Caco-2 (cell line): ENCODE measurements at regions of chr19 and their contacts with region 1.

Region 1: GRCh38 chr19:38402967-38403861 is at the start of gene FAM98C:
- DNase-seq: peak; percentile 98 to 99
- H3K4me3 ChIP-seq: peak within 1 kb of the TSS; percentile 96
- H3K4me3 Mint-ChIP-seq: peak within 1 kb of the TSS; percentile 99
- H3K27ac Mint-ChIP-seq: peak within 1 kb of the TSS; percentile 97
- H3K4me1 ChIP-seq: peaks cover 10% of the 10 kb centered on the region; the same call in 1 of the 2 replicates
- H3K4me1 Mint-ChIP-seq: no peaks in the 10 kb centered on the region
- H3K27me3 ChIP-seq: no peaks in the 10 kb centered on the region
- H3K27me3 Mint-ChIP-seq: peaks cover 5% of the 10 kb centered on the region
- CTCF ChIP-seq: peak; percentile 71 to 97
- total RNA-seq, gene FAM98C: 17.3 and 19.7 TPM in 2 replicates

Region 2: DNA sequence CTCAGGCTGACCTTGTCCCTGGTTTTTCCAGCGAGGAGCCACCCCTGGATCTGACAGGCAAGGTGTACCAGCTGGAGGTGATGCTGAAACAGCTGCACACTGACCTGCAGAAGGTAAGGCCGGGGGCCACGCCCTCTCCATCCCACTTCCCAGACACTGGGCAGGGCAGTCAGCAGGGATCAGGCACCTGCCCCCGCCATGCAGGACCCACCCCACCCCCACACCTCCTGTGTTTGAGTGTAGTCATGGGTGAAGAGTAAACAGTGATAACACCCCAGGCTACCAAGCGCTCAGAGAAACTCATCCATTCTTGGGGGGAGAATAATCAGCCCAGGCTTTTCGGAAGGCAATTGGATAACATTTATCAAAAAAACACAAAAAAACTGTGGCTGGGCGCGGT is 199.1 kb before region 1 on chr19:
- CTCF ChIA-PET with region 1: no interaction called
- POLR2A ChIA-PET with region 1: no interaction called
- intact Hi-C with region 1: no loop called
- DNase-seq: peak; percentile 52 to 60
- H3K4me3 ChIP-seq: no peak overlapping the region
- H3K4me3 Mint-ChIP-seq: no peak overlapping the region
- H3K27ac Mint-ChIP-seq: peak overlapping the region; percentile 61
- H3K4me1 ChIP-seq: no peaks in the 10 kb centered on the region
- H3K4me1 Mint-ChIP-seq: no peaks in the 10 kb centered on the region
- H3K27me3 ChIP-seq: no peaks in the 10 kb centered on the region
- H3K27me3 Mint-ChIP-seq: no peaks in the 10 kb centered on the region
- CTCF ChIP-seq: no peak

Region 3: GRCh38 chr19:38229585-38230073 is 173.6 kb before region 1 on chr19:
- CTCF ChIA-PET with region 1: interaction called, 7 read pairs
- POLR2A ChIA-PET with region 1: no interaction called
- intact Hi-C with region 1: loop called (anchors 2 kb)
- DNase-seq: peak; percentile 91 to 92
- H3K4me3 ChIP-seq: peak overlapping the region; percentile 37
- H3K4me3 Mint-ChIP-seq: peak overlapping the region; percentile 44
- H3K27ac Mint-ChIP-seq: no peak overlapping the region
- H3K4me1 ChIP-seq: peaks cover 12% of the 10 kb centered on the region; the same call in 1 of the 2 replicates
- H3K4me1 Mint-ChIP-seq: peaks cover 5% of the 10 kb centered on the region
- H3K27me3 ChIP-seq: no peaks in the 10 kb centered on the region
- H3K27me3 Mint-ChIP-seq: peaks cover 12% of the 10 kb centered on the region
- CTCF ChIP-seq: peak in 1 of 2 experiments; percentile 8

Region 4: DNA sequence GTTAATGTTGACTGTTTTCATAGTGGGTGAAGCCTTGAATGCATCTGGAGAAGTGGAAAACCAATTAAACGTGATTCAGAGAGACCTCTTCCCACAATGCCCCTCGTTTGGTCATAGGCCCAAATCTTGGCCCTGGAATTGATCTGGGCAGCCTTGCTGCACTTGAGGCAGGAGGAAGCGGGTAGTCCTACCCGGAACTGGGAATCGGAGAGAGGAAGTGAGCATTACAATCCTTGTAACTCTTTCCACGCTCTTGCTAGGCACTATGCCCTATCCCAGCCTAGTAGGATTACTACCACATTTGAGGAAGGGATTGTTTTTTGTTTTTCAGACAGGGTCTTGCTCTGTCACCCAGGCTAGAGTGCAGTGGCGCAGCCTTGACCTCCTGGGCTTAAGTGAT is 79.9 kb before region 1 on chr19:
- CTCF ChIA-PET with region 1: no interaction called
- POLR2A ChIA-PET with region 1: no interaction called
- intact Hi-C with region 1: no loop called
- DNase-seq: no peak
- H3K4me3 ChIP-seq: no peak overlapping the region
- H3K4me3 Mint-ChIP-seq: no peak overlapping the region
- H3K27ac Mint-ChIP-seq: no peak overlapping the region
- H3K4me1 ChIP-seq: 0 out of 2 replicates have a peak, but pooled peaks cover 4% of the 10 kb centered on the region
- H3K4me1 Mint-ChIP-seq: no peaks in the 10 kb centered on the region
- H3K27me3 ChIP-seq: no peaks in the 10 kb centered on the region
- H3K27me3 Mint-ChIP-seq: no peaks in the 10 kb centered on the region
- CTCF ChIP-seq: no peak

Region 5: DNA sequence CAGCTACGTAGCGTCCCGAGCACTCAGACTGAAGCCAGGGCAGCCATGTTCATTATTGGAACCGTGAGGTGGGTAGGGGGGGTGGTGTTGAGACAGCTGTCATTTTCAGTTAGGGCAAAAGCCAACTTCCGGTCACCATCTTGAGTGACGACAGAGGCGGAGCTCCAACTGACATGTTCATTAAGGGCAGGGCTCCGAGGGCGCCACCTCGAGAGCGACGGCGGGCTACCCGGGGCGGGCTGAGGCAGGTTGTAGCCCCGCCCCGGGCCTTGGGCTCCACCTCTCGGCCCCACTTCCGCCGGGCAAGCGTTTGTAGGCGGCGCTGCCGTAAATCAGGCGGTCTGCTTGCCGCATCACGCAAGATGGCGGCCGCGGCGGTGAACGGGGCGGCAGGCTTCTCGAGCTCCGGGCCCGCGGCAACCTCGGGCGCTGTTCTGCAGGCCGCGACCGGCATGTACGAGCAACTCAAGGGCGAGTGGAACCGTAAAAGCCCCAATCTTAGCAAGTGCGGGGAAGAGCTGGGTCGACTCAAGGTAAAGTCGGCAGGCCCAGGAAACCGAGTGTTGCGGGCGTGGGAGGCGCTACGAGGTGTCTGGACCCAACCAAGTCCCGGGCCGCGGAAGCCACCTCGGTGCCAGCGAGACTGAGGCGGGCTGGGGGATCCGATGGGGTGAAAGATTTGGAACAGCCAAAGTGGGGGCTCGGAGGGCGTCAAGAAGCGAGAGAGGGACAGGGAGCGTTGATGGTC is 28.6 kb before region 1 on chr19 and contains the start of gene PSMD8:
- CTCF ChIA-PET with region 1: interaction called, 58 read pairs
- POLR2A ChIA-PET with region 1: interaction called, 26 read pairs
- intact Hi-C with region 1: no loop called
- DNase-seq: peak; percentile 99
- H3K4me3 ChIP-seq: peak within 1 kb of the TSS; percentile 95
- H3K4me3 Mint-ChIP-seq: peak within 1 kb of the TSS; percentile 90
- H3K27ac Mint-ChIP-seq: peak within 1 kb of the TSS; percentile 92
- H3K4me1 ChIP-seq: 0 out of 2 replicates have a peak, but pooled peaks cover 4% of the 10 kb centered on the region
- H3K4me1 Mint-ChIP-seq: peaks cover 12% of the 10 kb centered on the region
- H3K27me3 ChIP-seq: no peaks in the 10 kb centered on the region
- H3K27me3 Mint-ChIP-seq: no peaks in the 10 kb centered on the region
- CTCF ChIP-seq: peak in 1 of 2 experiments; percentile 48
- total RNA-seq, gene PSMD8: 264 and 274 TPM in 2 replicates

Region 6: GRCh38 chr19:38441657-38442348 is 38.6 kb after region 1 on chr19:
- CTCF ChIA-PET with region 1: interaction called, 5 read pairs
- POLR2A ChIA-PET with region 1: no interaction called
- intact Hi-C with region 1: loop called (anchors 1 kb)
- DNase-seq: peak in 1 of 2 experiments; percentile 28
- H3K4me3 ChIP-seq: no peak overlapping the region
- H3K4me3 Mint-ChIP-seq: no peak overlapping the region
- H3K27ac Mint-ChIP-seq: no peak overlapping the region
- H3K4me1 ChIP-seq: no peaks in the 10 kb centered on the region
- H3K4me1 Mint-ChIP-seq: no peaks in the 10 kb centered on the region
- H3K27me3 ChIP-seq: no peaks in the 10 kb centered on the region
- H3K27me3 Mint-ChIP-seq: peaks cover 15% of the 10 kb centered on the region
- CTCF ChIP-seq: peak in 1 of 2 experiments; percentile 28

Region 7: GRCh38 chr19:38514812-38515633 is 111.8 kb after region 1 on chr19:
- CTCF ChIA-PET with region 1: interaction called, 9 read pairs
- POLR2A ChIA-PET with region 1: no interaction called
- intact Hi-C with region 1: loop called (anchors 2 kb)
- DNase-seq: peak; percentile 71 to 83
- H3K4me3 ChIP-seq: no peak overlapping the region
- H3K4me3 Mint-ChIP-seq: peak overlapping the region; percentile 20
- H3K27ac Mint-ChIP-seq: no peak overlapping the region
- H3K4me1 ChIP-seq: no peaks in the 10 kb centered on the region
- H3K4me1 Mint-ChIP-seq: no peaks in the 10 kb centered on the region
- H3K27me3 ChIP-seq: no peaks in the 10 kb centered on the region
- H3K27me3 Mint-ChIP-seq: peaks cover 4% of the 10 kb centered on the region
- CTCF ChIP-seq: peak; percentile 94

Region 8: DNA sequence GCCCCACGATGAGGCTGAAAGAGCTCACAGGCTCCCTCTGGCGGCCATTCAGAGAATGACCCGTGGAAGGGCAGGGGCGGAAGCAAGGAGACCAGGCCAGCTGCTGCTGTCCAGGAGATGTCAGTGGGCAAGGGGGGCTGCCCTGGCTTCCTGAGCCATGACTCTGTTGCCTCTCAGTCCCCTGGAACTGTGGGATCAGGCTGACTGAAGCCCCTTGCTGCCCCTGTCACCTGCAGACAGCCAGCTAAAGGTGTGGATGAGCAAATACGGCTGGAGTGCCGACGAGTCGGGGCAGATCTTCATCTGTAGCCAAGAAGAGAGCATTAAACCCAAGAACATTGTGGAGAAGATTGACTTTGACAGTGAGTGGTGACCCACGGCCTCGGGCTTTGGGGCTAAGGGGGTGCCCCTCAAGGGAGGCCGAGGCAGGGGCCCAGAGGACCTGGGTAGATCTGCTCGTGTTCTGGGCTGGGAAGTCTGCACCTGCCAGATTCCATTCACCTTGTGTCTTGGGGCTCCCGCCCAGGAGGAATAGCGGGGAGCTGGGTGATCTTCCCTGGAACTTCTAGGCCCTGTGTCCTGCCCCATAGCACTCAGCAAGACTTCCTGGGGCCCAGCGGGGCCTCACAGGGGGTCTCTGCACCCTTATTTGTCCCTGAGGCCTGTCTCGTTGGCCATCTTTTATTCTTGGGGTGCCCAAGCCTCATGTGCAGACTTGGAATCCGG is 231.7 kb after region 1 on chr19:
- CTCF ChIA-PET with region 1: interaction called, 30 read pairs
- POLR2A ChIA-PET with region 1: interaction called, 7 read pairs
- intact Hi-C with region 1: loop called (anchors 1 kb)
- DNase-seq: peak; percentile 75 to 86
- H3K4me3 ChIP-seq: no peak overlapping the region
- H3K4me3 Mint-ChIP-seq: no peak overlapping the region
- H3K27ac Mint-ChIP-seq: peak overlapping the region; percentile 58
- H3K4me1 ChIP-seq: peaks cover 59% of the 10 kb centered on the region
- H3K4me1 Mint-ChIP-seq: peaks cover 28% of the 10 kb centered on the region
- H3K27me3 ChIP-seq: no peaks in the 10 kb centered on the region
- H3K27me3 Mint-ChIP-seq: no peaks in the 10 kb centered on the region
- CTCF ChIP-seq: peak; percentile 95 to 97

Region 9: GRCh38 chr19:38929929-38930775 is 526.9 kb after region 1 on chr19 and contains the start of gene SARS2:
- CTCF ChIA-PET with region 1: interaction called, 16 read pairs
- POLR2A ChIA-PET with region 1: interaction called, 11 read pairs
- intact Hi-C with region 1: no loop called
- DNase-seq: peak; percentile 95
- H3K4me3 ChIP-seq: peak within 1 kb of the TSS; percentile 85
- H3K4me3 Mint-ChIP-seq: peak within 1 kb of the TSS; percentile 77
- H3K27ac Mint-ChIP-seq: peak within 1 kb of the TSS; percentile 99
- H3K4me1 ChIP-seq: 0 out of 2 replicates have a peak, but pooled peaks cover 5% of the 10 kb centered on the region
- H3K4me1 Mint-ChIP-seq: no peaks in the 10 kb centered on the region
- H3K27me3 ChIP-seq: no peaks in the 10 kb centered on the region
- H3K27me3 Mint-ChIP-seq: no peaks in the 10 kb centered on the region
- CTCF ChIP-seq: peak; percentile 98 to 99
- total RNA-seq, gene SARS2: 66.6 and 85.1 TPM in 2 replicates